ENCODE measurements at regions of chr10 and their contacts with region 1.

Region 1: GRCh38 chr10:88810196-88810961 is 7.8 kb downstream of the LIPM start:
- DNase-seq: no peak
- ATAC-seq: peak in 1 of 2 donors; percentile 68
- H3K4me3 ChIP-seq: no peak overlapping the region
- H3K27ac ChIP-seq: no peak overlapping the region
- H3K4me1 ChIP-seq: no peaks in the 10 kb centered on the region
- H3K27me3 ChIP-seq: no peaks in the 10 kb centered on the region

Region 2: DNA sequence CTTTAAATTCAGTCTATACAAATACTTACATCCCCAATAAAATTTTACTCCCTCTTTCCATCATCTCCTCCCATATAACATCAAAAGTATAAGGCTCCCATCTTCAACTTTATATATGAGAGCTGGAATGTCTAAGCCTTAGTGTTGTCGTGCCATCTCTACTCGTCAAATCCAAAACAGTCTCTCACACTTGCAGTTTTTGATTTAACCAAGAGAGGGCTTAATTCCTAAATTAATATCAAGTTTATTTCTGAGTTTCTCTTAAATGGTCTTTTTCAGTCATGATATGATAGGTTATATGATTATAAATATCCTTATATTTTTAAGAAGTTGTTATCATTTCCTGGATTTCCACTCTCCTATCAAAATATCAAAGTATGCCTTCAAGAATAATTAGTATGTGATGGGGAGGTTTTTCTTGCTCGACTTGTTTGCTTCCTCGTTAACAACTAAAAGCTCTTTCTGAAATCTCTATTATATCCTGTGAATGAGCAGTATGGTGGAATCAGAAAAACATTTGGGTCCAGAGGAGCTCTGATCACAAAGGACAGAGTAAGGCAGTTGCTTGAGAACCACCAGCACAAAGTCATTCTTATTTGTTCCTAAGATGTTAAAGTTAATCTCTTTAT is 116.9 kb before region 1 on chr10:
- intact Hi-C with region 1: loop called in 3 of 4 experiments (anchors 5 to 10 kb)
- DNase-seq: no peak
- ATAC-seq: no peak
- H3K4me3 ChIP-seq: no peak overlapping the region
- H3K27ac ChIP-seq: no peak overlapping the region
- H3K4me1 ChIP-seq: no peaks in the 10 kb centered on the region
- H3K27me3 ChIP-seq: peaks cover 2% of the 10 kb centered on the region